Mammary epithelial cell (primary cell): ENCODE measurements at regions of chr19 and their contacts with region 1.

Region 1: DNA sequence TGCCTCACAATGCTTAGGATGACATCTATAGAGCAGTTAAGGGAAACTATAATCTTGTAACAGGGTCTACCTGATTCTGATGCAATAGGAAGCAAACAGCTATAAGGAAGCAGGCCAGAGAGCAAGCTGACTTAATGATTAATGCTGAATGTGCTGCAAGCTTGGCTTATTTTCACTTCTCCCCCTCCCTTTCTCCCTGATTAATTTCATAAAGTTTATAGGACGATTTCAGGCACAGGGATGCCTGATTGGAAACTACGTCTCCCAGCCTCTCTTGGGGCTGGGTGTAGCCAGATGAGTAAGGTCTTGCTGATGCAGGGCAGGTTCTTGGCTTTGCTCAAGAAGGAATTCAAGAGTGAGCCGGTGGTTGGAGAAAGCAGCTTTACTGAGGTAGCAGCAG is 82.8 kb upstream of the MRI1 start:
- DNase-seq: no peak
- H3K4me3 ChIP-seq: no peak overlapping the region
- H3K27ac ChIP-seq: no peak overlapping the region
- H3K4me1 ChIP-seq: no peaks in the 10 kb centered on the region
- H3K27me3 ChIP-seq: no peaks in the 10 kb centered on the region
- CTCF ChIP-seq: no peak

Region 2: GRCh38 chr19:13637664-13638063 is 43.8 kb before region 1 on chr19:
- CTCF ChIA-PET with region 1: no interaction called
- dilution Hi-C with region 1: loop called (anchors 5 kb)
- in situ Hi-C with region 1: no loop called
- intact Hi-C with region 1: no loop called
- DNase-seq: peak; percentile 61
- H3K4me3 ChIP-seq: no peak overlapping the region
- H3K27ac ChIP-seq: no peak overlapping the region
- H3K4me1 ChIP-seq: no peaks in the 10 kb centered on the region
- H3K27me3 ChIP-seq: no peaks in the 10 kb centered on the region
- CTCF ChIP-seq: no peak

Region 3: GRCh38 chr19:14073261-14073924 is 391.9 kb after region 1 on chr19:
- CTCF ChIA-PET with region 1: no interaction called
- dilution Hi-C with region 1: no loop called
- in situ Hi-C with region 1: no loop called
- intact Hi-C with region 1: no loop called
- DNase-seq: peak; percentile 74
- H3K4me3 ChIP-seq: peak overlapping the region; percentile 48 to 84 (median 49)
- H3K27ac ChIP-seq: peak overlapping the region; percentile 29
- H3K4me1 ChIP-seq: peaks cover 26% of the 10 kb centered on the region
- H3K27me3 ChIP-seq: no peaks in the 10 kb centered on the region
- CTCF ChIP-seq: peak in 1 of 2 donors; percentile 38